ENCODE measurements at regions of chr20 and their contacts with region 1.

Region 1: DNA sequence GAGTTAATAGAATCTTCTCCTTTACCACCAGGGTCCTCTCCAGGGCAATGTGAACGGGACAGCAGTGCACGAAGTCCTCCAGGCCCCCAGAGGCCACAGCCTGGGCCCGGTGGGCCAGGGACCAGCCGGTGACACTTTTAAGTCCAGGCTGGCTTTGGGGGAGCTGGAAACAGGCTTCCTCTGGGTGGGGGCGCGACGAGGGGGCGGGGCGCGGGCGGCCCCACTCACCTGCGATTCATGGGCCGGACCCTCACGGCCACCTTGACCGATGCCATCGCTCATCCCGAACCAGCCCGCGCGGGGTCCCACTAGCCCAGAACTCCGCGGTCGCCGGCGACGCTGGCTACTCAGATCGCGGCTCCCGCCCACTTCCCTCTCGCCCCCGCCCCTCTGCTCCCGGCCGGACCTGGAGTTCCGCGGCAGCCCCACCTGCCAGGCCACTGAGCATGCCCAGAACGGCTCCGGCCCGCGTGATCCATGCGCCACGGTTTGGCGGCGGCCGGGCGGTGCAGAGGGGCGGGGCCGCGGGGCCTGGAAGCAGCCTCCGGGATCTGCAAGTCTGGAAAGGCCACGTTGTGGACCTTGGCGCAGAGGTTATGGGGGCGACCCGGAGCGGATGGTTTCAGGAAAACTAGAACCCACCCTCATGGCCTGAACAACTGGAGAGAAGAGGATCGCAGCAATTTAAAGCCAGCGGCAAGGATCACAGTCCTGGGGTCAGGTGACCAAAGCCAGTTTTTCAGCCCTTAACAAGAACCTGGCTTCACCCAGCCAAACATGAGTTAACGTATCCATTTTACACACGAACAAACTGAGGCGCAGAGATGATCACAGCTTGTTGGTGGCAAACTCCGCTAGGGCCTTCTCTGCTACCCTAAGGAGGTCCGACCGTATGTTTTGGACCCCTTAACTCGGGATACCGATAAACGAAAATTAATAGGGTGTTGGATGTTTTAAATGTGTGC is at the start of gene KIF16B:
- DNase-seq: peak; percentile 46 to 96
- H3K4me3 ChIP-seq: peak within 1 kb of the TSS; percentile 74 to 90
- H3K27ac ChIP-seq: peak within 1 kb of the TSS; percentile 74 to 75
- H3K4me1 ChIP-seq: peaks cover 0 to 4% of the 10 kb centered on the region in 2 donors
- H3K27me3 ChIP-seq: no peaks in the 10 kb centered on the region
- CTCF ChIP-seq: peak in 2 of 3 experiments; percentile 4 to 31
- total RNA-seq, gene KIF16B: 6.3 TPM

Region 2: GRCh38 chr20:16599257-16599656 is 26.0 kb after region 1 on chr20:
- intact Hi-C with region 1: no loop called
- DNase-seq: no peak
- H3K4me3 ChIP-seq: no peak overlapping the region
- H3K27ac ChIP-seq: no peak overlapping the region
- H3K4me1 ChIP-seq: no peaks in the 10 kb centered on the region
- H3K27me3 ChIP-seq: no peaks in the 10 kb centered on the region
- CTCF ChIP-seq: no peak

Region 3: GRCh38 chr20:16729565-16730456 is 156.5 kb after region 1 on chr20 and contains the start of gene SNRPB2:
- intact Hi-C with region 1: loop called (anchors 1 kb)
- DNase-seq: peak; percentile 64 to 96
- H3K4me3 ChIP-seq: peak within 1 kb of the TSS; percentile 79 to 80
- H3K27ac ChIP-seq: peak within 1 kb of the TSS; percentile 55 to 75
- H3K4me1 ChIP-seq: peaks cover 0 to 12% of the 10 kb centered on the region in 2 donors
- H3K27me3 ChIP-seq: no peaks in the 10 kb centered on the region
- CTCF ChIP-seq: no peak
- total RNA-seq, gene SNRPB2: 3.4 TPM

Region 4: GRCh38 chr20:18137412-18138265 is 1564.4 kb after region 1 on chr20 and contains the starts of genes KAT14 and PET117:
- intact Hi-C with region 1: loop called (anchors 5 kb)
- DNase-seq: peak; percentile 36 to 92
- H3K4me3 ChIP-seq: peak within 1 kb of the TSS; percentile 76 to 81
- H3K27ac ChIP-seq: peak within 1 kb of the TSS; percentile 88
- H3K4me1 ChIP-seq: peaks cover 3 to 18% of the 10 kb centered on the region in 2 donors
- H3K27me3 ChIP-seq: no peaks in the 10 kb centered on the region
- CTCF ChIP-seq: no peak
- total RNA-seq, gene KAT14: 1.7 TPM
- total RNA-seq, gene PET117: 37.1 TPM

Measured in ascending aorta (tissue), 2 donors.